ENCODE measurements at regions of chr6 and their contacts with region 1.

Region 1: DNA sequence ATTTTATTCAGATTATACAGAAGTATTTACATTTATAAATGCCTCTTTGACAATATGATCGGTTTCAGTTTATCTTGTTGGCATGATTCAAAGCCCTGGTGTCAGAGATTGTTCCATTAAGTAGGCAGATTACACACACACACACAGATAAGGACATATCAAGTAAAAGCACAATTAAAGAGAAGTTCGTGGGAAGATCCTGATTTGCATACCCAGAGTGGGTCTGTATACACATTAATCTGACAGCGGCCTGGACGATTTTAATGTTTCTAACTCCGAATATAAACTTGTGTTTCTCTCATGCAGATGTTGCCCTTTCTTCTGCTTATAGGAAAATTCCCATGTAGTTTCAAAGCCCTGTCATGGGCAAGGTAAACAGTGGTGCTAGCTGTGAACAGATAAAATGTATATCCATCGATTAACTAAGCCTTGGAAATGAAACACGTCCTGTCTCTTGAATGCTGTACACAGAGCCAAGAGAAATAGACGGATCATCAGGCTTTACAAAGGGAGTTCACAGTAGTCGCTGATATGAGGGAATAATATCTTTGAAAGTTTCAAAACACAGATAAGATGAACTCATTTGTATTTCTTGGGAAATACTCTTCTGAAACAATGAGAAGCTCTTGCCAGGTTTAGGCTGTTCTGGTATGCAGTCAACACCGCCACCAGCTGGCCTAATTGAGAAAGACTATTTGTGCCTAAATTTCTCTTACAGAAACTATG is 108.2 kb upstream of the GMDS start:
- DNase-seq: peak; percentile 48
- ATAC-seq: peak; percentile 84
- H3K4me3 ChIP-seq: no peak overlapping the region
- H3K27ac ChIP-seq: no peak overlapping the region
- H3K4me1 ChIP-seq: no peaks in the 10 kb centered on the region
- H3K27me3 ChIP-seq: no peaks in the 10 kb centered on the region
- CTCF ChIP-seq: peak; percentile 74 to 86 (median 81); a peak in 5 of 6 replicates
- POLR2A ChIP-seq: no peak
- RAD21 ChIP-seq: peak; percentile 93

Region 2: GRCh38 chr6:1596088-1596852 is 757.3 kb before region 1 on chr6:
- CTCF ChIA-PET with region 1: interaction called, 16 read pairs
- POLR2A ChIA-PET with region 1: no interaction called
- RAD21 ChIA-PET with region 1: no interaction called
- intact Hi-C with region 1: loop called (anchors 2 kb)
- DNase-seq: no peak
- ATAC-seq: peak; percentile 95
- H3K4me3 ChIP-seq: no peak overlapping the region
- H3K27ac ChIP-seq: no peak overlapping the region
- H3K4me1 ChIP-seq: peaks cover 2 to 7% of the 10 kb centered on the region in 2 experiments; a peak in 2 of 4 replicates
- H3K27me3 ChIP-seq: no peaks in the 10 kb centered on the region
- CTCF ChIP-seq: peak; percentile 81 to 90 (median 89)
- POLR2A ChIP-seq: no peak
- RAD21 ChIP-seq: peak; percentile 95

Region 3: GRCh38 chr6:1604158-1605030 is 749.2 kb before region 1 on chr6:
- CTCF ChIA-PET with region 1: interaction called, 10 read pairs
- POLR2A ChIA-PET with region 1: no interaction called
- RAD21 ChIA-PET with region 1: no interaction called
- intact Hi-C with region 1: loop called (anchors 1 kb)
- DNase-seq: no peak
- ATAC-seq: peak; percentile 93
- H3K4me3 ChIP-seq: peak overlapping the region; percentile 35 to 53
- H3K27ac ChIP-seq: no peak overlapping the region; the same call in 1 of the 2 replicates
- H3K4me1 ChIP-seq: peaks cover 0 to 16% of the 10 kb centered on the region in 2 experiments; a peak in 3 of 4 replicates
- H3K27me3 ChIP-seq: no peaks in the 10 kb centered on the region
- CTCF ChIP-seq: peak; percentile 77 to 84 (median 77)
- POLR2A ChIP-seq: no peak
- RAD21 ChIP-seq: peak; percentile 95

Region 4: DNA sequence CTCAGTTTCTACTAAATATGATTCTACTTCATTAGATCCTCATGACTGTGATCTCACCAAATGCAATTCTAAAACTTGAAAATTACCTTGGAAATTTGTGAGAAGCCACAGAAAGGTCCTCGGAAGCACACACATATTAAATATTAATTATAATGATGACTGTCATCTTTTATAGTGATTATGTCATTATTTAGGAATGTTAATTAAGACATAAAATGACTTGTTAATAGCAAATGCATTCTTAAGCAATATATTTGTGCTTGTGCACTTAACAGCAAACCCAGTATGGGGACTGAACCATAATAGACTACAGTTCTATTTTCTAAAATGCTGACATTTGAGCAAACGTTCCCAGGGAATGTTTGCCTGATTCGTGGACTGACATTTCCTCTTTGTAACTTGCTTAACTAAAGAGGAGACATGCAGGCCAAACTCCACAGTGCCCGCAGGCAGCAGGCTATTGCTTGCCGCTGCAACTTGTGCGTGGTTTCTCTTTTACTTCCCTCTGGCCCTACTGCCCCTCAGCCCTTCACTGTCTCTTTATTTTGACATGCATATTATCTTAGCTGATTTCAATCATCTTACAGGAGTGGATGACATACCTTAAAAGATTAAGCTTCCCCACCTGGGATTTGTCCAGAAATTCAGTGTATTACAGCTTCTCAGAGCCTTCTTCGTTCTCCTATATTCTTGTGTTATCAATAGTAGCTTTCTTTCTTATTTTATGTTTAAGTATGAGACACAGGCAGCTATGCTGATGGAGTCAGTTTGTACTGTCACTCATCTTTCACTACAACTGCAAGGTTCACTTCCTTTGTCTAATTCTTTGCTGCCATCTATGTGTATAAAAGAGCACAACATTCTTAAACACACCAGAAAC is 249.7 kb before region 1 on chr6:
- CTCF ChIA-PET with region 1: no interaction called
- POLR2A ChIA-PET with region 1: no interaction called
- RAD21 ChIA-PET with region 1: no interaction called
- intact Hi-C with region 1: loop called (anchors 5 kb)
- DNase-seq: peak; percentile 19
- ATAC-seq: peak; percentile 70
- H3K4me3 ChIP-seq: no peak overlapping the region
- H3K27ac ChIP-seq: peak overlapping the region; percentile 29
- H3K4me1 ChIP-seq: peaks cover 6 to 9% of the 10 kb centered on the region in 2 experiments; a peak in 3 of 4 replicates
- H3K27me3 ChIP-seq: no peaks in the 10 kb centered on the region
- CTCF ChIP-seq: peak in 2 of 3 experiments; percentile 45 to 62; a peak in 4 of 6 replicates
- POLR2A ChIP-seq: no peak
- RAD21 ChIP-seq: peak; percentile 78

Region 5: DNA sequence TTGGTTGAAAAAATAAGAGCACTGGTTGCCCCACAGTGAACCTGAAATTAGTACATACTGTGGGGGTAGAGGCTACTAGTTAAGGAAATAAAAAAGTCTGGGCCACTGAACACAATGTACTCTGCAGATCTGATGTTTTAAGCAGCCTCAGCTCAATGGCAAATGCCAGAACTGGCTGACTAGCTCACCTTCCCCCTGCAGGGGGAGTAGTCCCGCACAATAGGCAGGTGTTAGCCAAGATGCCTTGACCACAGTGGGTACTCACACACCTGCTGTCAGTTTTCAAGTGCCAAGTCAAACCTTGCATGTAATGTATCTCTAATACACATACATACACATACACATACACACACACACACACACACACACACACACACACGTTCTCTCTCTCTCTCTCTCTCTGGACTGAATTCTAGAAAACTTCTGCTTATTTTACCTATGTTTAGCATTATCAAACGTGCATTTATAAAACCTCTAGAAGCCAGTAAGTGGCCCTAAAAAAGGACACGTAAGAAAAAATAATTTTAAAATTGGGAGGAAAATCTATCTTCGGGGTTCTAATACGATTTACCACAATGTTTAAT is 144.3 kb before region 1 on chr6:
- CTCF ChIA-PET with region 1: interaction called, 22 read pairs
- POLR2A ChIA-PET with region 1: no interaction called
- RAD21 ChIA-PET with region 1: interaction called in 1 of 2 experiments, 3 read pairs
- intact Hi-C with region 1: loop called (anchors 2 kb)
- DNase-seq: peak; percentile 45
- ATAC-seq: peak; percentile 90
- H3K4me3 ChIP-seq: no peak overlapping the region
- H3K27ac ChIP-seq: no peak overlapping the region
- H3K4me1 ChIP-seq: no peaks in the 10 kb centered on the region
- H3K27me3 ChIP-seq: no peaks in the 10 kb centered on the region
- CTCF ChIP-seq: peak; percentile 35 to 69 (median 54); a peak in 5 of 6 replicates
- POLR2A ChIP-seq: no peak
- RAD21 ChIP-seq: peak; percentile 54

Region 6: GRCh38 chr6:2448820-2449571 is 95.4 kb after region 1 on chr6:
- CTCF ChIA-PET with region 1: no interaction called
- POLR2A ChIA-PET with region 1: no interaction called
- RAD21 ChIA-PET with region 1: no interaction called
- intact Hi-C with region 1: loop called (anchors 5 kb)
- DNase-seq: peak; percentile 59
- ATAC-seq: peak; percentile 89
- H3K4me3 ChIP-seq: no peak overlapping the region
- H3K27ac ChIP-seq: no peak overlapping the region
- H3K4me1 ChIP-seq: peaks cover 0 to 4% of the 10 kb centered on the region in 2 experiments; a peak in 1 of 4 replicates
- H3K27me3 ChIP-seq: no peaks in the 10 kb centered on the region
- CTCF ChIP-seq: peak; percentile 69 to 83 (median 83)
- POLR2A ChIP-seq: no peak
- RAD21 ChIP-seq: peak; percentile 94

Region 7: GRCh38 chr6:2695454-2696095 is 342.0 kb after region 1 on chr6:
- CTCF ChIA-PET with region 1: interaction called, 3 read pairs
- POLR2A ChIA-PET with region 1: no interaction called
- RAD21 ChIA-PET with region 1: no interaction called
- intact Hi-C with region 1: loop called (anchors 5 kb)
- DNase-seq: peak; percentile 36
- ATAC-seq: peak; percentile 84
- H3K4me3 ChIP-seq: no peak overlapping the region
- H3K27ac ChIP-seq: no peak overlapping the region
- H3K4me1 ChIP-seq: no peaks in the 10 kb centered on the region
- H3K27me3 ChIP-seq: 0 out of 2 replicates have a peak, but pooled peaks cover 6% of the 10 kb centered on the region
- CTCF ChIP-seq: peak; percentile 29 to 67 (median 53); a peak in 4 of 6 replicates
- POLR2A ChIP-seq: no peak
- RAD21 ChIP-seq: peak; percentile 91